ENCODE measurements at regions of chr1 and their contacts with region 1.

Region 1: GRCh38 chr1:226912587-226913176 is 27.4 kb upstream of the COQ8A start:
- DNase-seq: peak; percentile 65 to 83
- ATAC-seq: peak; percentile 63 to 93
- H3K4me3 ChIP-seq: no peak overlapping the region
- H3K27ac ChIP-seq: peak overlapping the region in 3 of 4 donors; percentile 38 to 84 (median 39)
- H3K4me1 ChIP-seq: peaks cover 0 to 31% of the 10 kb centered on the region in 2 donors
- H3K27me3 ChIP-seq: no peaks in the 10 kb centered on the region
- CTCF ChIP-seq: peak; percentile 66 to 87 (median 81)
- POLR2A ChIP-seq: no peak

Region 2: DNA sequence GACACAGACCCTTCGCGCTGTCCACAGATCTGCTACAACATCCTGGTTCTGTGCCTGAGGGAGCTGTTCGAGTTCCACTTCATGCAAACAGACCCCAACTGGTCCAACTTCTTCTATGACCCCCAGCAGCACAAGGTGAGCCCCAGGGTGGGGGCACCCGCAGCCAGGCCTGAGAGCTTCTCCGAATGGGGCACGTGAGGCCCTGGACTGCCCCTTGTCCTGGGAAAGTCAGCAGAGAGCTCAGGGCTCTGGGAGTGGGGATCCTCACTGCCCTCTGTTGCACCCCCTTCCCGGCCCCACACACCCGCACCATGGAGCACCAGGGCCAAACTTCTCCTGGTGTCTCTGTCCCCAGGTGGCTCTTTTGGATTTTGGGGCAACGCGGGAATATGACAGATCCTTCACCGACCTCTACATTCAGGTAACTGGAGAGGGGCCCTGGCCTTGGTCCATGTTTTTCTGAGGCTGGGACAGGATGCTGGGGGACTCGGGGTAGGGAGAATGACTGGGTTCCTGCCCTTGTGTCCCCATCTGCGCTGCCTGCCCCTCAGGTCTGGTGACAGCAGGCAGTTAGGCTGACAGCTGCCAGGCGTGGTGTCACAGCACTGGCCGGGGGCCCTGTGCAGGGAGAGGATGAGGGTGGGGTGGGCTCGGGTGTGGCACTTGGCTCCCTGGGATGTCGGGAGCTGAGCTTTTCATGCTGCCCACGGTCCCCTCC is 72.0 kb after region 1 on chr1:
- in situ Hi-C with region 1: no loop called
- intact Hi-C with region 1: loop called (anchors 2 kb)
- DNase-seq: peak; percentile 41 to 89
- ATAC-seq: peak in 1 of 2 donors; percentile 19
- H3K4me3 ChIP-seq: no peak overlapping the region
- H3K27ac ChIP-seq: peak overlapping the region; percentile 89 to 99 (median 99)
- H3K4me1 ChIP-seq: peaks cover 81 to 87% of the 10 kb centered on the region in 2 donors
- H3K27me3 ChIP-seq: no peaks in the 10 kb centered on the region
- CTCF ChIP-seq: no peak
- POLR2A ChIP-seq: peak; percentile 9 to 29

Region 3: DNA sequence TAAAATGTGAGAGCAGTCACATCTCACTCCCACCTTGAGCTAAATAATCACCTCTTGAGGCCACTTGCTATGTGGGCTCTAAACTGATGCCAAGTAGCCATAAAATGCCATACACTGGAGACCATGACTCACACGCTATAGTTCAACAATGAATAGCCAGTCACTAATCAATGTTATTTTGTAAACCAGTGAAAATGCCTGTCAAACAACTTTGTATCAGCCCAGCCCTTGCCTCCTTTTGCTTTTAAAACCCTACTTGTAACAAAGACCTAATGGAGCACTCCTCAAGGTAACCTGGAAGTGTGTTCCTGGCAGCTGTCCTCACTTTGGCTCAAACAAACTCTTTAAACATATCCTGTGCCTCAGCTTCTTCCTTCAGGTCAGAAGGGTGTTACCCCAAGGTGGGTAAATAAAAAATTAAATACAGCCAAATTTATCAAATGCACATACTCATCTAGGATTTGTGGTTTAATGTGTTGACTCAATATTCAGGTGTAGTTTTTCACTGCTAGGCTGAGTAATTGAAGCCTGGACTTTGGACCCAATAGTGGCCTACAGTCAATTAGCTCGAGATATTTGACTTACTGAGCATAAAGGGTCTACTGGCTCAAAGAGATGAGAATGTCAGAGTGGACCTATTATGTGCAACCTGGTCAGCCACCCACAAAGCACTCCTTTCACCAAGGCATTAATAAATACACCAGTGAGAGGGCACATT is 181.7 kb after region 1 on chr1:
- in situ Hi-C with region 1: no loop called
- intact Hi-C with region 1: no loop called
- DNase-seq: no peak
- ATAC-seq: no peak
- H3K4me3 ChIP-seq: no peak overlapping the region
- H3K27ac ChIP-seq: no peak overlapping the region
- H3K4me1 ChIP-seq: no peaks in the 10 kb centered on the region
- H3K27me3 ChIP-seq: no peaks in the 10 kb centered on the region
- CTCF ChIP-seq: no peak
- POLR2A ChIP-seq: no peak